ENCODE measurements at regions of chr2 and their contacts with region 1.

Region 1: GRCh38 chr2:181573140-181573736 is 83.7 kb downstream of the CERKL start:
- DNase-seq: no peak
- H3K4me3 ChIP-seq: no peak overlapping the region
- H3K27ac ChIP-seq: no peak overlapping the region
- H3K4me1 ChIP-seq: peaks cover 0 to 5% (median 0%) of the 10 kb centered on the region in 4 donors
- H3K27me3 ChIP-seq: no peaks in the 10 kb centered on the region
- CTCF ChIP-seq: peak; percentile 20 to 28 (median 24)
- EP300 ChIP-seq: no peak
- POLR2A ChIP-seq: no peak

Region 2: DNA sequence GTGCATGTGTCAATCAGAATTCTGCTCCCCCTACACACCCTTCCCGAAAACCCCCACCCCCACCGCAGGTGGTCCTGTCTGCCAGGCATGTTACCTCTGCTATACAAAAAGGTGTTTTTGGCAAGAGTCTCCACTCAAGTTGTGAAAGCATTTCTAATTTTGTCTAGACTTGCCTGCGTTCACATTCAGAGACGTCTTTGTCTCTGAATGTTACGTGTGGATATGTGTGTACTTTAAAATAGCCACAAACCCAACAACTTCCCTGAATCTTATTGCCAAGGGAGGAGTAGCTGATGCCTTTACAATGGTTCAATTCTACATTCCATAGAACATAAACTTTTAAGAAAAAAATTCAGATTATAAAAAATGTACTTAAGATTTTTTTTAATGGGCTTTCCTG is 49.5 kb before region 1 on chr2:
- intact Hi-C with region 1: no loop called
- DNase-seq: no peak
- H3K4me3 ChIP-seq: no peak overlapping the region
- H3K27ac ChIP-seq: no peak overlapping the region
- H3K4me1 ChIP-seq: no peaks in the 10 kb centered on the region
- H3K27me3 ChIP-seq: no peaks in the 10 kb centered on the region
- CTCF ChIP-seq: no peak
- EP300 ChIP-seq: no peak
- POLR2A ChIP-seq: no peak

Region 3: DNA sequence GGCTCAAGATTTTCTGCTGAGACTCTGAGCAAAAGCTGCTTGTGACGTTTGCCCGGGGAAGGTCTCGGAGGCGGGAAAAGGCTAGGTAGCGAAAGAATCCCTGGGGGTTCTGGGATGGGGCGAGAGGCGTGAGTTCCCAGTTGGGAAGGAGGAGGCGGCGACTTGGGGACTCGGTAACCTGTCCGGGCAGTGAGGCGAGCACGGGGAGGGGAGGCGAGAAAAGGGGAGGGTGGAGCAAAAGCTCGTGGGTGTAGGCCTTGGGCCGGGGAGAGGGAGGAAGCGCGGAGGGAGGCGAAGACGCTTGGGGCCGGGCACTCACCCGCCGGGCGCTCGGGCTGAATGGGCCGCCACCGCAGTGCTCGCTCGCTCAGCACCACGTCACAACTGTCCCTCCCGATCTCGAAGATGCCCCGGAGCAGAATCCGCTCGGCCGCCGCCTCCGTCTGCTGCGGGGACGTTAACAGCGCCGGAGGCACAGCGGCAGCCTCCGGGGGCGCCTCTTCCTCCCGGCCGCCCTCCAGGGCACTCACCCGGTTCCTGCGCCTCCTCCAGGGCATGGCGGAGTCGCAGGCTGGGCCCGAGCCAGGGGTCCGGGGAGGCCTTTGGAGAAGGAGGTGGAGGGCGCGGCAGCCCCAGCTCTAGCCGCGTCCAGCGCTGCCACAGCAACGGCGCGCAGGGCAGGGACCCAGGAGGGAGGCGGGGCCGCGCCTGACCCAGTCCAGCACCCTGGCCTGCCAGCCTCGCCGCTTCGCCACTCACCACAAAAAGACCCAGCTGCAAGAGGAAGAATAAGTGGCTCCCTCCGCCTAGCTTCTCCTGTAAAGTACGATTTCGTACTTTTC is 83.4 kb after region 1 on chr2 and contains the start of gene CERKL:
- intact Hi-C with region 1: no loop called
- DNase-seq: no peak
- H3K4me3 ChIP-seq: peak within 1 kb of the TSS; percentile 57 to 69 (median 61)
- H3K27ac ChIP-seq: no peak within 1 kb of the TSS
- H3K4me1 ChIP-seq: peaks cover 6 to 15% (median 14%) of the 10 kb centered on the region in 4 donors
- H3K27me3 ChIP-seq: peaks cover 0 to 39% (median 0%) of the 10 kb centered on the region in 4 donors
- CTCF ChIP-seq: no peak
- EP300 ChIP-seq: no peak
- POLR2A ChIP-seq: no peak
- total RNA-seq, gene CERKL: 0.17 to 0.19 TPM in 2 of 4 donors, not detected in the others

Region 4: GRCh38 chr2:181715033-181715630 is 141.9 kb after region 1 on chr2:
- intact Hi-C with region 1: loop called (anchors 10 kb)
- DNase-seq: no peak
- H3K4me3 ChIP-seq: no peak overlapping the region
- H3K27ac ChIP-seq: no peak overlapping the region
- H3K4me1 ChIP-seq: no peaks in the 10 kb centered on the region
- H3K27me3 ChIP-seq: no peaks in the 10 kb centered on the region
- CTCF ChIP-seq: peak; percentile 57 to 62 (median 60)
- EP300 ChIP-seq: no peak
- POLR2A ChIP-seq: no peak

Region 5: GRCh38 chr2:181823405-181823804 is 250.2 kb after region 1 on chr2:
- intact Hi-C with region 1: no loop called
- DNase-seq: no peak
- H3K4me3 ChIP-seq: no peak overlapping the region
- H3K27ac ChIP-seq: no peak overlapping the region
- H3K4me1 ChIP-seq: peaks cover 0 to 19% (median 6%) of the 10 kb centered on the region in 4 donors
- H3K27me3 ChIP-seq: no peaks in the 10 kb centered on the region
- CTCF ChIP-seq: no peak
- EP300 ChIP-seq: no peak
- POLR2A ChIP-seq: no peak